ENCODE measurements at regions of chr2 and their contacts with region 1.

Region 1: GRCh38 chr2:66574701-66575624 is 140.0 kb downstream of the MEIS1 start:
- DNase-seq: no peak
- ATAC-seq: peak; percentile 73

Region 2: GRCh38 chr2:65722028-65722778 is 852.8 kb before region 1 on chr2:
- intact Hi-C with region 1: loop called (anchors 10 kb)
- DNase-seq: peak; percentile 68
- ATAC-seq: peak; percentile 94

Region 3: GRCh38 chr2:66536997-66537396 is 38.0 kb before region 1 on chr2:
- intact Hi-C with region 1: loop called (anchors 5 kb)
- DNase-seq: no peak
- ATAC-seq: peak; percentile 61

Region 4: GRCh38 chr2:67476809-67477790 is 902.1 kb after region 1 on chr2:
- intact Hi-C with region 1: loop called (anchors 5 kb)
- DNase-seq: no peak
- ATAC-seq: peak; percentile 76

Region 5: GRCh38 chr2:67671464-67672450 is 1096.8 kb after region 1 on chr2:
- intact Hi-C with region 1: loop called (anchors 10 kb)
- DNase-seq: no peak
- ATAC-seq: no peak